ENCODE measurements at regions of chr4 and their contacts with region 1.

Region 1: GRCh38 chr4:24980064-24980690 is 50.6 kb downstream of the LGI2 start:
- DNase-seq: peak in 4 of 5 donors; percentile 33 to 48 (median 44)
- H3K4me3 ChIP-seq: no peak overlapping the region
- H3K4me3 Mint-ChIP-seq: peak overlapping the region in 6 of 8 donors; percentile 5 to 64 (median 37)
- H3K27ac ChIP-seq: no peak overlapping the region
- H3K27ac Mint-ChIP-seq: no peak overlapping the region
- H3K4me1 ChIP-seq: no peaks in the 10 kb centered on the region
- H3K4me1 Mint-ChIP-seq: peaks cover 4 to 14% (median 7%) of the 10 kb centered on the region in 4 donors
- H3K27me3 ChIP-seq: no peaks in the 10 kb centered on the region
- H3K27me3 Mint-ChIP-seq: peaks cover 12 to 26% of the 10 kb centered on the region in 2 donors

Region 2: DNA sequence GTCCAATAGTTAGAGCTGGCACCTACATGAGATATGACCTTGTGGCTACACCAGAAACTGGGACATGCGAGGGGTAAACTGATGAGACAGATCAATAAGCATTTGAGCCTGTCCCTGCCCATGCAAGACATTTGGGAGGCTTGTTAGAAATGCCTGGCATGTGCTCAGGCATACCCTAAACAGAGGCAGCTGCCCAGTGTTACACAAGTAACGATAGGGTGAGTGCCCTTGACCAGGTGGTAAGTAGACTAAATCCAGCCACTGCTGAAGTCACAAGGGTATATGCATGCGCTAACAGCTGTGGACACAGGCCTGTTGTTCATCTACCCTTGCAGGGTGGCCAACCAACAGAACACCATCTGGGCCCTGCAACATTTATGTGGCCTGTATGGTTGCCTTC is 11.2 kb before region 1 on chr4:
- CTCF ChIA-PET with region 1: interaction called, 13 read pairs
- POLR2A ChIA-PET with region 1: no interaction called
- intact Hi-C with region 1: no loop called
- DNase-seq: no peak
- H3K4me3 ChIP-seq: no peak overlapping the region
- H3K4me3 Mint-ChIP-seq: no peak overlapping the region
- H3K27ac ChIP-seq: no peak overlapping the region
- H3K27ac Mint-ChIP-seq: no peak overlapping the region
- H3K4me1 ChIP-seq: no peaks in the 10 kb centered on the region
- H3K4me1 Mint-ChIP-seq: no peaks in the 10 kb centered on the region
- H3K27me3 ChIP-seq: no peaks in the 10 kb centered on the region
- H3K27me3 Mint-ChIP-seq: peaks cover 0 to 9% of the 10 kb centered on the region in 2 donors

Region 3: GRCh38 chr4:24991015-24991414 is 10.8 kb after region 1 on chr4:
- CTCF ChIA-PET with region 1: interaction called, 34 read pairs
- POLR2A ChIA-PET with region 1: no interaction called
- intact Hi-C with region 1: no loop called
- DNase-seq: no peak
- H3K4me3 ChIP-seq: no peak overlapping the region
- H3K4me3 Mint-ChIP-seq: no peak overlapping the region
- H3K27ac ChIP-seq: no peak overlapping the region
- H3K27ac Mint-ChIP-seq: no peak overlapping the region
- H3K4me1 ChIP-seq: no peaks in the 10 kb centered on the region
- H3K4me1 Mint-ChIP-seq: no peaks in the 10 kb centered on the region
- H3K27me3 ChIP-seq: no peaks in the 10 kb centered on the region
- H3K27me3 Mint-ChIP-seq: peaks cover 2% of the 10 kb centered on the region in 2 donors

Region 4: GRCh38 chr4:25144870-25145481 is 164.8 kb after region 1 on chr4:
- CTCF ChIA-PET with region 1: interaction called, 13 read pairs
- POLR2A ChIA-PET with region 1: no interaction called
- intact Hi-C with region 1: no loop called
- DNase-seq: peak in 1 of 5 donors; percentile 7
- H3K4me3 ChIP-seq: no peak overlapping the region
- H3K4me3 Mint-ChIP-seq: no peak overlapping the region
- H3K27ac ChIP-seq: no peak overlapping the region
- H3K27ac Mint-ChIP-seq: no peak overlapping the region
- H3K4me1 ChIP-seq: no peaks in the 10 kb centered on the region
- H3K4me1 Mint-ChIP-seq: peaks cover 0 to 1% (median 0%) of the 10 kb centered on the region in 4 donors
- H3K27me3 ChIP-seq: no peaks in the 10 kb centered on the region
- H3K27me3 Mint-ChIP-seq: no peaks in the 10 kb centered on the region

Region 5: GRCh38 chr4:25367004-25367621 is 386.9 kb after region 1 on chr4:
- CTCF ChIA-PET with region 1: interaction called, 90 read pairs
- POLR2A ChIA-PET with region 1: no interaction called
- intact Hi-C with region 1: no loop called
- DNase-seq: peak in 4 of 5 donors; percentile 21 to 35 (median 29)
- H3K4me3 ChIP-seq: no peak overlapping the region
- H3K4me3 Mint-ChIP-seq: no peak overlapping the region
- H3K27ac ChIP-seq: no peak overlapping the region
- H3K27ac Mint-ChIP-seq: peak overlapping the region in 1 of 7 donors; percentile 53
- H3K4me1 ChIP-seq: no peaks in the 10 kb centered on the region
- H3K4me1 Mint-ChIP-seq: peaks cover 0 to 1% (median 0%) of the 10 kb centered on the region in 4 donors
- H3K27me3 ChIP-seq: no peaks in the 10 kb centered on the region
- H3K27me3 Mint-ChIP-seq: no peaks in the 10 kb centered on the region

Region 6: DNA sequence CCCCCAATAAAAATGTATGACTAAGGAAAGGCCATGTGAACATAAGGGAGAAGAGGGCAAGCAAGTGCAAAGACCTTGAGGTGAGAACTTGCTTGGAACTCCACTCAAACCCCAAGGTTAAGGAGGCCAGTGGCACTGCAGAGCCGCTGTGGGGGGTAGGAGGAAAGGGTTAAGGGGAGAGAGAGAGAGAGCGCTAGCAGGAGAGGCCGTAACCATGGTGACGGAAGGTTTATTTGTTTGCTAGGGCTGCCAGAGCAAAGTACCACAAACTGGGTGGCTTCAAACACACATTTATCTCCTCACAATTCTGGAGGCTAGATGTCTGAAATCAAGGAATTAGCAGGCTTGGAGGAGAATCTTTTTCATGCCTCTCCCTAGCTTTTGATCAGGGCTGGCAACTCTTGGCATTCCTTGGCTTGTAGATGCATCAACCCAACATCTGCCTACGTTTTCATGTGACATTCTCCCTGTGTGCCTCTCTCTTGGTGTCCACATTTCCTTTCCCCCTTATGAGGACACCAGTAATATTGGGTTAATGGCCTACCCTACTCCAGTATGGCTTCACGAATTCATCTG is 969.1 kb after region 1 on chr4:
- CTCF ChIA-PET with region 1: no interaction called
- POLR2A ChIA-PET with region 1: no interaction called
- intact Hi-C with region 1: no loop called
- DNase-seq: no peak
- H3K4me3 ChIP-seq: no peak overlapping the region
- H3K4me3 Mint-ChIP-seq: no peak overlapping the region
- H3K27ac ChIP-seq: no peak overlapping the region
- H3K27ac Mint-ChIP-seq: no peak overlapping the region
- H3K4me1 ChIP-seq: peaks cover 15% of the 10 kb centered on the region
- H3K4me1 Mint-ChIP-seq: peaks cover 10 to 19% (median 13%) of the 10 kb centered on the region in 4 donors
- H3K27me3 ChIP-seq: peaks cover 4% of the 10 kb centered on the region
- H3K27me3 Mint-ChIP-seq: peaks cover 5 to 24% of the 10 kb centered on the region in 2 donors

Region 7: DNA sequence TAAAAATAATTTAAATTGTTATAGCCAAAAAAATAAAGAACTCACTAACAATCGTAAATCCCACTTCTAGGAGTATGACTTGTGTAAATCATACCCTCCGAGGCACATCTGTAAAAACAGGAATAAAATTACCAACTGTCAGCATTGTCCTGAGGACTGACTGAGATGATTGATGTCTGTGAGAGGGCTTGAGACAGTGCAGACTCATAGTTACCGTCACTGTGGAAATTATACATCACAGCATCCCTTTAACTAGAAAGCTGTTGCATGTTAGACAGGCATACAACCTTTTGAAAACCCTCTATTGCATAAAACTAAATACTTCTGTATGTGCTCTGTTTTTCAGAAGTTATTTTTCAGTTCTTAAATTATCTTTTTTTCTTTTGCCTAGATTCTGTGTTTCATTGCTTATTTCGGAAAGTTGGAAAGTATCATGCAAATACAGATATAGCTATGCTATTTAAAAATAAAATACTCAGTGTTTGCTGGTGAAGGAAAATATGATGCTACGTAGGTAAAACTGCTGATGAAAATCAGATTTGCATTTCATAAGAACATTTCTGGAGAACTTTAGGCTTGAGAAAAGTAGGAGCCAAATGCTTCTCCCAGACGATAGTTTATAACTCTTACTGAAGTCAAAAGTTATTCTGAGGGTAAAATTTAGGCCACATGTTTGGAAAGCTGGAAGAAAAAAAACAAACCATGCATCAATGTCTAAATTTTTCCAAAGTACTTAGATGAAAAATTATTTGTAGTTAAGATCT is 1327.0 kb after region 1 on chr4:
- CTCF ChIA-PET with region 1: no interaction called
- POLR2A ChIA-PET with region 1: no interaction called
- intact Hi-C with region 1: no loop called
- DNase-seq: no peak
- H3K4me3 ChIP-seq: no peak overlapping the region
- H3K4me3 Mint-ChIP-seq: no peak overlapping the region
- H3K27ac ChIP-seq: no peak overlapping the region
- H3K27ac Mint-ChIP-seq: no peak overlapping the region
- H3K4me1 ChIP-seq: no peaks in the 10 kb centered on the region
- H3K4me1 Mint-ChIP-seq: peaks cover 3 to 16% (median 4%) of the 10 kb centered on the region in 4 donors
- H3K27me3 ChIP-seq: no peaks in the 10 kb centered on the region
- H3K27me3 Mint-ChIP-seq: no peaks in the 10 kb centered on the region

Measured in CD4-positive, alpha-beta memory T cell (primary cell).